Common myeloid progenitor, CD34-positive (primary cell): ENCODE measurements at regions of chr6 and their contacts with region 1.

Region 1: GRCh38 chr6:118963003-118963402 is 28.0 kb upstream of the MCM9 start:
- DNase-seq: peak; percentile 2 to 36 (median 29)
- H3K4me3 ChIP-seq: no peak overlapping the region
- H3K27ac ChIP-seq: no peak overlapping the region
- H3K4me1 ChIP-seq: no peaks in the 10 kb centered on the region
- H3K27me3 ChIP-seq: no peaks in the 10 kb centered on the region

Region 2: DNA sequence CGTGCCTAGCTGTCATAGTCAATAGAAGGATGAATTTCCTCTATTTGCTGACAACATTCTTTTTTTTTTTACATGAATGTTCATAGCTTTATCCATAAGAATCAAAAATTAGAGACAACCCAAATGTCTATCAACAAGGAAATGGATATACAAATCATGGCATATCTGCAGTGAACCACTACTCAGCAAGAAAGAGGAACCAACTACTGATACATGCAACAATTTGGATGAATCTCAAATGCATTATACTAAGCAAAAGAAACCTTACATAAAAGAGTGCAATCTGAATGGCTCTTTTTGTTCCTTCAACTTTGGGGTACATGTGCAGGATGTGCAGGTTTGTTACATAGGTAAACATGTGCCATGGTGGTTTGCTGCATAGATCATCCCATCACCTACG is 10.3 kb before region 1 on chr6:
- CTCF ChIA-PET with region 1: interaction called, 11 read pairs
- POLR2A ChIA-PET with region 1: no interaction called
- DNase-seq: peak in 2 of 3 donors; percentile 7 to 26
- H3K4me3 ChIP-seq: no peak overlapping the region
- H3K27ac ChIP-seq: no peak overlapping the region
- H3K4me1 ChIP-seq: no peaks in the 10 kb centered on the region
- H3K27me3 ChIP-seq: no peaks in the 10 kb centered on the region